Mammary epithelial cell (primary cell): ENCODE measurements at regions of chr1 and their contacts with region 1.

Region 1: GRCh38 chr1:247936415-247936814 is 11.7 kb downstream of the OR2AJ1 start:
- DNase-seq: no peak
- H3K4me3 ChIP-seq: no peak overlapping the region
- H3K27ac ChIP-seq: no peak overlapping the region
- H3K4me1 ChIP-seq: no peaks in the 10 kb centered on the region
- H3K27me3 ChIP-seq: no peaks in the 10 kb centered on the region
- CTCF ChIP-seq: no peak

Region 2: GRCh38 chr1:247415423-247416361 is 520.7 kb before region 1 on chr1 and contains the start of gene NLRP3:
- CTCF ChIA-PET with region 1: no interaction called
- dilution Hi-C with region 1: no loop called
- in situ Hi-C with region 1: no loop called
- intact Hi-C with region 1: no loop called
- DNase-seq: peak; percentile 73
- H3K4me3 ChIP-seq: no peak within 1 kb of the TSS
- H3K27ac ChIP-seq: no peak within 1 kb of the TSS
- H3K4me1 ChIP-seq: no peaks in the 10 kb centered on the region
- H3K27me3 ChIP-seq: no peaks in the 10 kb centered on the region
- CTCF ChIP-seq: no peak
- total RNA-seq, gene NLRP3: 0.12 to 3.0 TPM

Region 3: GRCh38 chr1:247849616-247850015 is 86.8 kb before region 1 on chr1:
- CTCF ChIA-PET with region 1: no interaction called
- dilution Hi-C with region 1: no loop called
- in situ Hi-C with region 1: no loop called
- intact Hi-C with region 1: no loop called
- DNase-seq: peak; percentile 12
- H3K4me3 ChIP-seq: no peak overlapping the region
- H3K27ac ChIP-seq: no peak overlapping the region
- H3K4me1 ChIP-seq: no peaks in the 10 kb centered on the region
- H3K27me3 ChIP-seq: no peaks in the 10 kb centered on the region
- CTCF ChIP-seq: no peak

Region 4: GRCh38 chr1:248243204-248243603 is 306.8 kb after region 1 on chr1:
- CTCF ChIA-PET with region 1: interaction called, 3 read pairs
- dilution Hi-C with region 1: no loop called
- in situ Hi-C with region 1: no loop called
- intact Hi-C with region 1: loop called (anchors 1 kb)
- DNase-seq: peak; percentile 27
- H3K4me3 ChIP-seq: no peak overlapping the region
- H3K27ac ChIP-seq: no peak overlapping the region
- H3K4me1 ChIP-seq: no peaks in the 10 kb centered on the region
- H3K27me3 ChIP-seq: no peaks in the 10 kb centered on the region
- CTCF ChIP-seq: peak; percentile 75 to 83

Region 5: GRCh38 chr1:248404024-248404423 is 467.6 kb after region 1 on chr1:
- CTCF ChIA-PET with region 1: no interaction called
- dilution Hi-C with region 1: no loop called
- in situ Hi-C with region 1: no loop called
- intact Hi-C with region 1: loop called (anchors 10 kb)
- DNase-seq: peak; percentile 4
- H3K4me3 ChIP-seq: no peak overlapping the region
- H3K27ac ChIP-seq: no peak overlapping the region
- H3K4me1 ChIP-seq: no peaks in the 10 kb centered on the region
- H3K27me3 ChIP-seq: no peaks in the 10 kb centered on the region
- CTCF ChIP-seq: no peak

Region 6: GRCh38 chr1:248686815-248687214 is 750.4 kb after region 1 on chr1:
- CTCF ChIA-PET with region 1: no interaction called
- dilution Hi-C with region 1: no loop called
- in situ Hi-C with region 1: no loop called
- intact Hi-C with region 1: loop called (anchors 10 kb)
- DNase-seq: no peak
- H3K4me3 ChIP-seq: no peak overlapping the region
- H3K27ac ChIP-seq: no peak overlapping the region
- H3K4me1 ChIP-seq: no peaks in the 10 kb centered on the region
- H3K27me3 ChIP-seq: no peaks in the 10 kb centered on the region
- CTCF ChIP-seq: no peak